Activated CD4-positive, alpha-beta T cell treated with anti-CD3 and anti-CD28 coated beads for 36 hours (primary cell): ENCODE measurements at regions of chr7 and their contacts with region 1.

Region 1: GRCh38 chr7:44082541-44083207 is 344 bp upstream of the POLM start:
- DNase-seq: peak; percentile 99
- ATAC-seq: peak; percentile 95
- H3K4me3 Mint-ChIP-seq: peak overlapping the region; percentile 70
- H3K27ac Mint-ChIP-seq: peak overlapping the region; percentile 79
- H3K4me1 Mint-ChIP-seq: peaks cover 36% of the 10 kb centered on the region
- H3K27me3 Mint-ChIP-seq: no peaks in the 10 kb centered on the region

Region 2: DNA sequence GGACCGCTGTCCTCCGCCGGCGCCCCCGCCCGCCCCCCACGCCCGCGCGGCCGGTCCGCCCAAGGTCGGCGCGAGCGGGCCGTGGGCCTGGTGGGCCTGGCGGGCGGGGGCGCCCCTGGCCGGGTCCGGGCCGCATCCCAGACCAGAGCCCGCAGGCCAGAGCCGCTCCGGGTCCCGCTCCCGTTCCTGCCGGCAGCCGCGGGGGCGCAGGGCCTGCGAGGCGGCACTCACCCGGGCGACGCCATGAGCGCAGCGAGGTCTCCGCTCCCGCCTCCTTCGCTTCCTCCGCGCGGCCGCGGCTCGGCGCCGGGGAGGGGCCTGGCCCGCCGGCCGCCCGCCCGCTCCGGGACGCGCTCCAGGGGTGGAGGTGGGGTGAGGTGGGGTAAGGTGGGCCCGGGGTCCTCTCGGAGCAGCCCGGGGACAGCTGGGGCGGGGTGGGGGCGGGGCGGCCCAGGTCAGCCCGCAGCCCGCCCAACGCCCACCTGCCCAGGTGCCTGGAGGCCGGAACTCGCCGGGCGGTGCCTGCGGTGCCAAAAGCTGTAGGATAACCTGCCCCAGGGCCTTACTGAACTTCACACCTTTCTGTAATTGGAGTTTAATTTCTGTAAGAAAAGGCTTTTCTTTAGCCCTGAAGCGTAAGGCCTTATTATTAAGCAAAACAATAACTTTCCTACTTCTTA is 176.2 kb before region 1 on chr7 and contains the start of gene URGCP:
- CTCF ChIA-PET with region 1: no interaction called
- POLR2A ChIA-PET with region 1: no interaction called
- intact Hi-C with region 1: loop called in 1 of 2 experiments (anchors 5 kb)
- DNase-seq: peak; percentile 73
- ATAC-seq: peak; percentile 81
- H3K4me3 Mint-ChIP-seq: peak within 1 kb of the TSS; percentile 89
- H3K27ac Mint-ChIP-seq: peak within 1 kb of the TSS; percentile 96
- H3K4me1 Mint-ChIP-seq: peaks cover 33% of the 10 kb centered on the region
- H3K27me3 Mint-ChIP-seq: no peaks in the 10 kb centered on the region
- total RNA-seq, gene URGCP: 22.2 to 23.0 TPM

Region 3: GRCh38 chr7:44103923-44104859 is 21.5 kb after region 1 on chr7 and contains the start of gene AEBP1:
- CTCF ChIA-PET with region 1: no interaction called
- POLR2A ChIA-PET with region 1: no interaction called
- intact Hi-C with region 1: loop called in 1 of 2 experiments (anchors 2 kb)
- DNase-seq: peak; percentile 59
- ATAC-seq: peak; percentile 68
- H3K4me3 Mint-ChIP-seq: peak within 1 kb of the TSS; percentile 76
- H3K27ac Mint-ChIP-seq: peak within 1 kb of the TSS; percentile 43
- H3K4me1 Mint-ChIP-seq: peaks cover 12% of the 10 kb centered on the region
- H3K27me3 Mint-ChIP-seq: peaks cover 4% of the 10 kb centered on the region
- total RNA-seq, gene AEBP1: 18.2 to 18.3 TPM

Region 4: DNA sequence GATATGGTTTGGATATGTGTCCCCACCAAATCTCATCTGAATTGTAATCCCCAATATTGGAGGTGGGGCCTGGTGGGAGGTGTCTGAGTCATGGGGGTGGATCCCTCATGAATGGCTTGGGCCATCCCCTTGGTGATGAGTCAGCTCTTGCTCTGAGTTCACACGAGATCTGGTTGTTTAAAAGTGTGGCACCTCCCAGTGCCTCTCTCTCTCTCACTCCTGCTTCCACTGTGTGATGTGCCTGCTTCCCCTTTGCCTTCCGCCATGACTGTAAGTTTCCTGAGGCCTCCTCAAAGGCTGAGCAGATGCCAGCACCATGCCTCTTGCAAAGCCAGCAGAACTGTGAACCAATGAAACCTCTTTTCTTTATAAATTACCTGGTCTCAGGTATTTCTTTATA is 111.4 kb after region 1 on chr7:
- CTCF ChIA-PET with region 1: interaction called, 5 read pairs
- POLR2A ChIA-PET with region 1: no interaction called
- intact Hi-C with region 1: loop called (anchors 1 to 2 kb)
- DNase-seq: peak; percentile 75
- ATAC-seq: peak; percentile 91
- H3K4me3 Mint-ChIP-seq: no peak overlapping the region
- H3K27ac Mint-ChIP-seq: no peak overlapping the region
- H3K4me1 Mint-ChIP-seq: peaks cover 8% of the 10 kb centered on the region
- H3K27me3 Mint-ChIP-seq: peaks cover 6% of the 10 kb centered on the region

Region 5: DNA sequence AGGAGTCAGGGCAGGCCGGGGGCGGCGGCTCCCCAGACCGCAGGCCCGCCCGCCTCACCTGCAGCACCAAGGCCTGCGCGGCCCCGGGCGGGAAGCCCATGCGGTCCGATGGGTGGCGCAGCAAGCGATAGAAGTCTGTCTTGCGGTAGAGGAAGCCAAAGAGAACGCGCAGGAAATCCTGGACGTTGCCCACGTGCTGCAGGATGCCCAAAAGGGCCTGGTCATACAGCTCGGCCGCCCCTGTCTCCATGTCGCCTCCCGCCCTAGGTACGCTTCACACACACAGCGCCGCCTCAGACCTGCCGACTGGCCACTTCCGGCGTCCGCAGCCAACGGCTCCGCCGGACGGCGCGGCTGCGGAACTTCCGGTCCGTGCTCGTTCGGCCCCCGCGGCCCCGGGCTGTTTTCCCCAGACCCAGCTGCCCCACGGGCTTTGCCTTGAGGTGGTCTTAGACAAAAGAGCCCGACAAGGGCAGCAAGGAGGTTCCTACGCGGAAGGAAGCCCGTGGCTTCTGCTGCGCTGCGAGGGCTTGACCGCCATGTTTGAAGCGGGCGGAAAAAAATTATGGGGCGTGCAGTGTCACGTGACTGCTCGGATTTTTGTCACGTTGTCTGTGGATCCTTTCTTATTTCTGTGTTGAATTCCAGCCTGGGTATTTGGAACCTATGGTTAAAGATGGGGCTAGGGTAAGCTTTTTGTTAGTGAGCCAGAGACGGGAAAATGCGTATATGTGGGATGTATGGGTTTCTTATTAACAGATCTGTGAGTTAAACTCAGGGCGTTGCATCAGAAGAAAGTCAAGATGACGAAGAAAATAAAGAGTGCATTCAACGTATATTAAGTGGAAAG is 407.9 kb after region 1 on chr7 and contains the start of gene NUDCD3:
- CTCF ChIA-PET with region 1: no interaction called
- POLR2A ChIA-PET with region 1: no interaction called
- intact Hi-C with region 1: loop called in 1 of 2 experiments (anchors 1 kb)
- DNase-seq: peak; percentile 88
- ATAC-seq: peak; percentile 74
- H3K4me3 Mint-ChIP-seq: peak within 1 kb of the TSS; percentile 86
- H3K27ac Mint-ChIP-seq: peak within 1 kb of the TSS; percentile 100
- H3K4me1 Mint-ChIP-seq: peaks cover 42% of the 10 kb centered on the region
- H3K27me3 Mint-ChIP-seq: peaks cover 3% of the 10 kb centered on the region
- total RNA-seq, gene NUDCD3: 70.3 to 77.6 TPM

Region 6: DNA sequence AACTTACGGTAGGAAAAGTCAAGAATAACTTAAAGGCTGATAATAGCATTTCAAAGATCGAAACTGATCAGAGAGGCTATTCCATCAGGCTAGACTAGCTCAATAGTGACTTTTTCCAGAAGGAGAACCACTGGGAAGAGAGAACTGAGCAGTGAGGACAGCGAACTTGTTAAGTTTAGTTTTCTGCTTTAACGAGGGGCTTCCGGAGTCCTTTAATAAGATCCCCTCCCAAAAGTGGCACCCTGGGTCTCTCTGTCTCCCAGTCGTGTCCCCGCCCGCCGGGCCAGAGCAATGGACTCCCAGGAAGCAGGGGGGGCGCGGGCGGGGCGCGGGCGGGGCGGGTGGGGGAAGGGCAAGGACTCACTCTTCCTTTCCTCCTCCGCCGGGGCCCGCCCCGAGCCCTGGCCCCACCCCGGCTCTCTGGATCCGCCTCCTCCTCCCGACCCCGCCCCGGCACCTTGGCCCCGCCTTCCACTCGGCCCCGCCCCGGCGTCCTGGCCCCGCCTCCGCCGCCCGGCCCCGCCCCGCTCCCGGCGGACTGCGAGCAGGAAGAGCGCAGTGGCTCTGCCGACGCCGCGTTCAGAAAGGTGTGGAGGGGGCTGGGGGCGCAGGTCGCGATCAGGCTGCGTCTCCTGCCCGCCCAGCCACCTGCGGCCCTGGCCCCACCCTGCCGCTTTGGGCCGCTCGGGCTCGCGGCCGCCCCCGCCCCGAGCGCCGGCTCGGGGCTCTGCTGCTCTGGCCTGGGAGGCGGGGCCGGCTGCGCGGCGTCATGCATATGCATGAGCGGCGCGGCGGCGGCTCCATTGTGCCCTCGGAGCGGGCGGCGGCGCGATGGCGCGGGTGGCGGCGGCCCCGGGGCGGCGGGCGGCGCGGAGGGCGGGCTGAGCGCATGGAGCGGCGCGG is 665.6 kb after region 1 on chr7 and contains the start of gene ZMIZ2:
- CTCF ChIA-PET with region 1: no interaction called
- POLR2A ChIA-PET with region 1: no interaction called
- intact Hi-C with region 1: loop called in 1 of 2 experiments (anchors 1 kb)
- DNase-seq: peak; percentile 97
- ATAC-seq: peak; percentile 87
- H3K4me3 Mint-ChIP-seq: peak within 1 kb of the TSS; percentile 78
- H3K27ac Mint-ChIP-seq: peak within 1 kb of the TSS; percentile 97
- H3K4me1 Mint-ChIP-seq: peaks cover 31% of the 10 kb centered on the region
- H3K27me3 Mint-ChIP-seq: no peaks in the 10 kb centered on the region
- total RNA-seq, gene ZMIZ2: 82.8 to 106 TPM

Region 7: DNA sequence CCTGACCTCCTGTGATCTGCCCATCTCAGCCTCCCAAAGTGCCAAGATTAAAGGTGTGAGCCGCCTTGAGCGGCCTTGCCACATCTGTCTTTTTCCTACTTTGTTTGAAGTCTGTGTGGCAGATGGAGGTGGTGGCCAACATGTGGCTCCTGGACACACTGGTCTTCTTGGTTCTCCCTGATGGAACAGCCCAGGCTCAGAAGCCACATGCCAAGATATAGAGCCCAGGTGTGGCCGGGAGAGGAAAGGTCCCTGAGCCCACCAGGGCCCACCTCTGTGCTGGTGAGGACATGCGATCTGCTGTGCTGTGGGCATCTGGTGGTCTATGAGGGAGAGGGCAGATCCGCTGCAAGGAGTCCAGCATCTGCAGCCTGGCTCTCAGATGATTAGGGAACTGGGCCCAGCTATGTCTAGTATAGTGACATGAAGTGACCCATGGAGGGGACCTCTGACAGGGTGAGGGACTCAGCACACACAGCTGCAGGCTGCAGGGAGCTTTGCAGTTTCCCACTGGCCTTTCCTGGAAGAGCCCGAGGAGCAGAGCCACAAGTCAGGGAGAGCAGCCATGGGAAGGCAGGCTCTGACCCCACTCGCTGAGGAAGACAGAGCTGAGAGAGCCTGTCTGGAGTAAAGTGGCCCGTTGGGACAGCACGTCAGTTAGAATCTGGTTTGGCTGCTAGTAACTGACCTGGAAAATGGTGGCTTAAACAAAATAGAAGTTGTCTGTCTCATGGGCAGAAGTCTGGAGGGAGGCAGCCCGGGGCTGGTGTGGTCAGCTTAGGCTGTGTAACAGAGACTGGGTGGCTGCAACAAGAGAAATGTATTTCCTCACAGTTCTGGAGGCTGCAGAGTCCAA is 1517.4 kb after region 1 on chr7:
- CTCF ChIA-PET with region 1: no interaction called
- POLR2A ChIA-PET with region 1: no interaction called
- intact Hi-C with region 1: no loop called
- DNase-seq: no peak
- ATAC-seq: no peak
- H3K4me3 Mint-ChIP-seq: no peak overlapping the region
- H3K27ac Mint-ChIP-seq: no peak overlapping the region
- H3K4me1 Mint-ChIP-seq: no peaks in the 10 kb centered on the region
- H3K27me3 Mint-ChIP-seq: no peaks in the 10 kb centered on the region